ENCODE measurements at regions of chr6 and their contacts with region 1.

Region 1: GRCh38 chr6:84227434-84228197 is at the start of gene CEP162:
- DNase-seq: peak; percentile 82
- H3K4me3 ChIP-seq: peak within 1 kb of the TSS; percentile 78 to 83 (median 79)
- H3K27ac ChIP-seq: peak within 1 kb of the TSS; percentile 55
- H3K4me1 ChIP-seq: no peaks in the 10 kb centered on the region
- H3K27me3 ChIP-seq: no peaks in the 10 kb centered on the region
- CTCF ChIP-seq: peak; percentile 74 to 75
- total RNA-seq, gene CEP162: 4.3 to 5.0 TPM

Region 2: GRCh38 chr6:83615025-83615999 is 612.3 kb before region 1 on chr6:
- CTCF ChIA-PET with region 1: interaction called, 9 read pairs
- dilution Hi-C with region 1: no loop called
- in situ Hi-C with region 1: loop called in 1 of 2 experiments (anchors 25 kb)
- intact Hi-C with region 1: loop called (anchors 2 kb)
- DNase-seq: peak; percentile 12
- H3K4me3 ChIP-seq: no peak overlapping the region
- H3K27ac ChIP-seq: no peak overlapping the region
- H3K4me1 ChIP-seq: no peaks in the 10 kb centered on the region
- H3K27me3 ChIP-seq: peaks cover 2% of the 10 kb centered on the region
- CTCF ChIP-seq: peak; percentile 48 to 61

Region 3: GRCh38 chr6:83859410-83860358 is 367.9 kb before region 1 on chr6 and contains the start of gene CYB5R4:
- CTCF ChIA-PET with region 1: no interaction called
- dilution Hi-C with region 1: no loop called
- in situ Hi-C with region 1: loop called in 1 of 2 experiments (anchors 10 kb)
- intact Hi-C with region 1: no loop called
- DNase-seq: peak; percentile 95
- H3K4me3 ChIP-seq: peak within 1 kb of the TSS; percentile 75 to 80 (median 75)
- H3K27ac ChIP-seq: peak within 1 kb of the TSS; percentile 72
- H3K4me1 ChIP-seq: peaks cover 8% of the 10 kb centered on the region
- H3K27me3 ChIP-seq: no peaks in the 10 kb centered on the region
- CTCF ChIP-seq: peak; percentile 24 to 60
- total RNA-seq, gene CYB5R4: 8.7 to 21.6 TPM

Measured in mammary epithelial cell (primary cell).